B cell (primary cell): ENCODE measurements at regions of chrX and their contacts with region 1.

Region 1: DNA sequence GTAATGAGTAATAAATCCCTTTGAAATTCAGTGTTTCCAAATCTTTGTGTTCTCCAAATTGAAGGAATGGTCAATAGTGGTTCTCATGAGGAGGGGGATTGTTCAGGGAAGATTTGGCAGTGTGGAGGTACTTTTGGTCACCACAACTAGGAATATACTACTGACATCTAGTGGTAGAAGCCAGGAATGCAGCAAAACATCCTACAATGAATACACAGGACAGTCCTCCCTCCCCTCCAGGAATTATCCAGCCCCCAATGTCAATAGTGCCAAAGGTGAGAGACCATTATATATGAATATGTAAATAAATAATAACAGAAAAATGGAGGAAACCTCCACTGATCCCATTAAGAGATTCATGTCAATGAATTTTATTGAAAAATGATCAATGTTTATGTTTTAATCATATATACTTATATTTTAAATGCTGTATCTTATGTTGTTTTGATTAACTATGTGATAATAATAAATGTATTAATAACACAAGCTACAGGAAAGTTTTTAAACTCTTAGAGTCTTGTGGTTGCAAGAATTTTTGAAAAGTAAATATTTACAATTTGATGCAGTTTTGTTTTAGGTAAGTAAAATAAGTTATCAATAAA is 14.4 kb upstream of the FAM9A start:
- DNase-seq: peak; percentile 47
- ATAC-seq: no peak
- H3K4me3 ChIP-seq: no peak overlapping the region
- H3K4me3 Mint-ChIP-seq: no peak overlapping the region
- H3K27ac ChIP-seq: no peak overlapping the region
- H3K27ac Mint-ChIP-seq: no peak overlapping the region
- H3K4me1 ChIP-seq: no peaks in the 10 kb centered on the region
- H3K4me1 Mint-ChIP-seq: no peaks in the 10 kb centered on the region
- H3K27me3 ChIP-seq: no peaks in the 10 kb centered on the region
- H3K27me3 Mint-ChIP-seq: peaks cover 8% of the 10 kb centered on the region
- CTCF ChIP-seq: peak; percentile 78

Region 2: GRCh38 chrX:7996414-7996813 is 819.2 kb before region 1 on chrX:
- CTCF ChIA-PET with region 1: no interaction called
- POLR2A ChIA-PET with region 1: no interaction called
- intact Hi-C with region 1: loop called (anchors 10 kb)
- DNase-seq: peak; percentile 33
- ATAC-seq: no peak
- H3K4me3 ChIP-seq: no peak overlapping the region
- H3K4me3 Mint-ChIP-seq: no peak overlapping the region
- H3K27ac ChIP-seq: no peak overlapping the region
- H3K27ac Mint-ChIP-seq: no peak overlapping the region
- H3K4me1 ChIP-seq: no peaks in the 10 kb centered on the region
- H3K4me1 Mint-ChIP-seq: no peaks in the 10 kb centered on the region
- H3K27me3 ChIP-seq: no peaks in the 10 kb centered on the region
- H3K27me3 Mint-ChIP-seq: no peaks in the 10 kb centered on the region
- CTCF ChIP-seq: peak; percentile 52

Region 3: GRCh38 chrX:8748855-8749254 is 66.7 kb before region 1 on chrX:
- CTCF ChIA-PET with region 1: interaction called, 3 read pairs
- POLR2A ChIA-PET with region 1: no interaction called
- intact Hi-C with region 1: loop called (anchors 1 kb)
- DNase-seq: peak; percentile 32
- ATAC-seq: no peak
- H3K4me3 ChIP-seq: no peak overlapping the region
- H3K4me3 Mint-ChIP-seq: no peak overlapping the region
- H3K27ac ChIP-seq: no peak overlapping the region
- H3K27ac Mint-ChIP-seq: no peak overlapping the region
- H3K4me1 ChIP-seq: no peaks in the 10 kb centered on the region
- H3K4me1 Mint-ChIP-seq: no peaks in the 10 kb centered on the region
- H3K27me3 ChIP-seq: peaks cover 0 to 2% (median 0%) of the 10 kb centered on the region in 4 experiments
- H3K27me3 Mint-ChIP-seq: peaks cover 4% of the 10 kb centered on the region
- CTCF ChIP-seq: peak; percentile 40

Region 4: DNA sequence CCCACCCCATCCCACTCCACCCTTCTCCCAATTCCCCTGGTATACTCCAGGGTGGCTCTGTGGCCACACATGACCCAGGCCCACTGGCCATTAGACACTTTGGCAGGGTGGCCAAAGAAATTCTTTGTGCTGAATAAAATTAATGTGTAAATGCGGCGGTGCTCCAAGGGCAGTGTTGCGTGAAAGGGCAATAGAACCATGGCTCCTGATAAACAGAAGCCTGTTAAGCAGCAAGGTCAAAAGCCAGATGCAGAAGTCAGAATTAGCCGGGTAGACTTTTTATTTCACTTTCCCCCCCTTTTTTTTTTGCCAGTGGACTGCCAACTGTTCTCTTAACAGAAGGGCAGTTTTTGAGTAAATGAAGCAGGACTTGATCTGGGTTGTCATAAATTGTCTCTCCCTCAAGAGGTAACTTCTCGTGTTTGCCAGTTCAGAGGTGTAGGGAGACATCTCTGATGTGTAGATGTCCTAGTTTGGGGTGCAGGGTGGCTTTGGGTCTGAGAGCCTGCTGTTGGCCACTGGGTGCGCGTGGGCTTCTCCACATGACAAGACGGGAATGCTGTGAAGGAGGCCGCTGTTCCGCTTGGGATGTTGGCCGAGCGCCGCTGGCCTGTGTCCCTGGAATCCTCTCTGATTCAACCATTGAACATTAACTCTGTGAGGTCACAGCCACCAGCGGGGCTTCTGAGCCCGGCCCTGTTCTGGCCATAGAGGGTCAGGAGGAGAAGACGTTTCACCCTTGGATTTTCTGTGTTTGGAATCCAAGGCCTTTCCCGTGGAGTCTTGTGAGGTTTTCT is 788.7 kb after region 1 on chrX:
- CTCF ChIA-PET with region 1: no interaction called
- POLR2A ChIA-PET with region 1: no interaction called
- intact Hi-C with region 1: no loop called
- DNase-seq: no peak
- ATAC-seq: no peak
- H3K4me3 ChIP-seq: no peak overlapping the region
- H3K4me3 Mint-ChIP-seq: no peak overlapping the region
- H3K27ac ChIP-seq: no peak overlapping the region
- H3K27ac Mint-ChIP-seq: no peak overlapping the region
- H3K4me1 ChIP-seq: peaks cover 10 to 13% of the 10 kb centered on the region in 2 donors
- H3K4me1 Mint-ChIP-seq: peaks cover 40% of the 10 kb centered on the region
- H3K27me3 ChIP-seq: no peaks in the 10 kb centered on the region
- H3K27me3 Mint-ChIP-seq: no peaks in the 10 kb centered on the region
- CTCF ChIP-seq: no peak